K562 (cell line): ENCODE measurements at regions of chr9 and their contacts with region 1.

Region 1: DNA sequence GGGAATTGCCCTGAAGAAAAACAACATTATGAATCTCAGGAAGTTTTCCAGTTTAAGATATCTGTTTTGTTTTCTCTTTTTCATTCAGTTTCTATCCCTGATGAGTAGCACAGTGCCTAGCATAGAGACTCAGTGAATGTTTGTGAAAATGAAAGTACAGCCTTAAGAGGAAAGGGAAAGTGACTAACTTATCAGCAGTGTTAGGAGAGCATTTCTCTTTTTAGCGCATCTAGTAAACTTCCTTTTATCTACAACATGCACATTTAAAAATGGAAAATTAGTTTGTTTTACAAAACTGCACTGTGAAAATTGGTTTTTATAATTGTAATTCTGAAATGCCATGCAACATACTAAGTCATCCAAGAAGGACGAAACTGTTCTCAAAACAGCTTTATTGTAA is 110.8 kb downstream of the SMARCA2 start:
- DNase-seq: no peak
- ATAC-seq: no peak
- H3K4me3 ChIP-seq: no peak overlapping the region
- H3K27ac ChIP-seq: no peak overlapping the region
- H3K4me1 ChIP-seq: no peaks in the 10 kb centered on the region
- H3K27me3 ChIP-seq: no peaks in the 10 kb centered on the region
- CTCF ChIP-seq: no peak
- EP300 ChIP-seq: no peak
- POLR2A ChIP-seq: no peak
- RAD21 ChIP-seq: no peak

Region 2: DNA sequence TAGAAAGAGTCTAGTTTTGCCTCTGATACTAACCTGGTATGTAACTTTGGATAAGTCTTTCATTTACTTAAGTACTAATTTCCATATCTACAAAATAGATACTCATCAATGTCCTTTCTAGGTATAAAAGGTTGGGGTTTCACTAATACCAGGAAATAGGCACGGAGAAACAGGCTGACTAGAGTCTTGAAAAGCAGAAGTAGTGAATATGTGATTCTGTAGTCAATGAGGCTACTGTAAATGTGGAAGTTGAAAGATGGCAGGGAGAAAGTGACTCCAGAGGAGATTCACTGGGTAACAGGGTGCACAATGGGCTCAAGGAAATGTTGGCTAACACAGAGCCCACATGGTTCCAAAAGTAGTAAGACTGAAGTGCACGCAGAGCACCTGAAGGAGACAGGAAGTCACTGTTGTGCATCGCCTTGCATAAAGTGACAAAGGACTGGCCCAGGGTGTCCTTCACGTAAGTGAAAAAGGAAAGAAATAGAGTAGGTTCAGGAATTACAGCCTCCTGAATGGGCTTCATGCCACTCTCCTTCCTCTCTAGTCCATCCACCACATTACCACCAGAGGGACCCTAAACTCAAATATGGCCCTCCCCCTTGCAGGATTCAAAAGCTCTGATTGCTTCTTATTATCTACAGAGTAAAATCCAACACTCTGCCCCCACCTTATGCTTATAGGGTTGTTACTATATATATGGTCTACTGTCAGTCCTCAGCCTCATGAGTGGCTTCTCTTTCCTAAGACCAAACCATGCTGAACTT is 398.7 kb before region 1 on chr9:
- CTCF ChIA-PET with region 1: no interaction called
- POLR2A ChIA-PET with region 1: no interaction called
- in situ Hi-C with region 1: loop called (anchors 10 kb)
- intact Hi-C with region 1: no loop called
- DNase-seq: no peak
- ATAC-seq: no peak
- H3K4me3 ChIP-seq: no peak overlapping the region
- H3K27ac ChIP-seq: no peak overlapping the region
- H3K4me1 ChIP-seq: no peaks in the 10 kb centered on the region
- H3K27me3 ChIP-seq: no peaks in the 10 kb centered on the region
- CTCF ChIP-seq: no peak
- EP300 ChIP-seq: no peak
- POLR2A ChIP-seq: no peak
- RAD21 ChIP-seq: peak in 1 of 2 experiments; percentile 9; a peak in 1 of 4 replicates

Region 3: DNA sequence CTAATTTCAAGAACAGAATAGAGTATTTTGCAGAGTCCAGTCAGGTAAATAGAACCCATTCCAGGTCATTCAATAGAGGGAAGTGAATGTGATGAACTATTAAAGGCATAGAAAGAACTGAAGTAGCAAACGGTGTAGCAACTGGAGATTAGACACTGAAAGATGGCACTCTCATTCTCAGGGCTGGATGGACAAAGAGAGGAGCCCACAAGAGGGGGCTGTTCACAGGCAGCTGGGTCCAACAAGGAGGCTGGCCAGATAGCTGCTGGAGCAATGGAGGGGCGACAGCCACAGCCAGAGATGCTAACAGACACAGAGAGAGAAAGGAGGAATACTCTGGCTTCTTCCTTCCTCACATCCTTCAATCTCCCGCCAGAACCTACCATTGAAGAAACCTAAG is 203.9 kb before region 1 on chr9:
- CTCF ChIA-PET with region 1: no interaction called
- POLR2A ChIA-PET with region 1: no interaction called
- in situ Hi-C with region 1: no loop called
- intact Hi-C with region 1: no loop called
- DNase-seq: peak in 2 of 4 experiments; percentile 4 to 6
- ATAC-seq: peak; percentile 52; the same call in 1 of the 3 replicates
- H3K4me3 ChIP-seq: no peak overlapping the region
- H3K27ac ChIP-seq: no peak overlapping the region
- H3K4me1 ChIP-seq: no peaks in the 10 kb centered on the region
- H3K27me3 ChIP-seq: peaks cover 0 to under 1% of the 10 kb centered on the region in 2 experiments; a peak in 1 of 5 replicates
- CTCF ChIP-seq: peak in 2 of 3 experiments; percentile 6 to 19; a peak in 1 of 6 replicates
- EP300 ChIP-seq: no peak
- POLR2A ChIP-seq: no peak
- RAD21 ChIP-seq: peak in 1 of 2 experiments; percentile 24; a peak in 1 of 4 replicates